Right ventricle myocardium inferior (tissue), 1 donor: ENCODE measurements at regions of chr5 and their contacts with region 1.

Region 1: DNA sequence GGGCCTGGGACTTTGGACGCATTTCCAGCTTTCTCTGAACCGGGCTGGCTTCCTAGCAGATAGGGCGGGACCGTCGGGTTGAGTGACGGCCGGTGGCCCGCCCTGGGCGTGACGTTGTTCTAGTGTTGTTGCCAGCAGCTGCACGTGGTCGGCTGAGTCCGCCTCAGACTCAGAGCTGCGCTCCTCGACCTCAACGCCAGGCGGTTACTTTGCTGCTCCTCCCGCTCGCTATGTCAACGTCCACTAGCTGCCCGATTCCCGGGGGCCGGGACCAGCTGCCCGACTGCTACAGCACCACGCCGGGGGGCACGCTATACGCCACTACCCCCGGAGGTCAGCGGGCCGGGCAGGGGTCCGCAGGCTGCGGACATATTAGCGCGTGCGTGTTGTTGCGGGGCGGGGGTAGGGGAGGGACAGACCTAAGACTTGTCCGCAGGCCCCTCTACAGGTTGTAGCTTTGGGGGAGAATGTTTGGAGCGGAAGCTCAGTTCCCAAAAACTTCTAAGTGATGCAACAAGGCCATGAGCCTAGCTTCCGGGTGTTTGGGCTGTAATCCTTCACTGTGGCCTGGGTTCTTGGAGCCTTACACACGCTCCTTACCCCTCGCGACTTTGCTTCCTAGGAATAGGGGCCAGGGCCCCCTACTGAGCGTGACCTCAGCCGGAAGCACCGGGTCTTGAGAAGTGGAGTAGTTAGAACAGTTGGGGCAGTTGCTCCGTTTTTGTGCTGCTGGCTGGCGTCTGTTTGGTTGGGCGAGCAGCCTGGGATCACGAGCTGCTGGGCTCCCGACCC is at the start of gene EIF4EBP3:
- DNase-seq: peak; percentile 98
- ATAC-seq: peak; percentile 93
- total RNA-seq, gene EIF4EBP3: 11.7 TPM

Region 2: DNA sequence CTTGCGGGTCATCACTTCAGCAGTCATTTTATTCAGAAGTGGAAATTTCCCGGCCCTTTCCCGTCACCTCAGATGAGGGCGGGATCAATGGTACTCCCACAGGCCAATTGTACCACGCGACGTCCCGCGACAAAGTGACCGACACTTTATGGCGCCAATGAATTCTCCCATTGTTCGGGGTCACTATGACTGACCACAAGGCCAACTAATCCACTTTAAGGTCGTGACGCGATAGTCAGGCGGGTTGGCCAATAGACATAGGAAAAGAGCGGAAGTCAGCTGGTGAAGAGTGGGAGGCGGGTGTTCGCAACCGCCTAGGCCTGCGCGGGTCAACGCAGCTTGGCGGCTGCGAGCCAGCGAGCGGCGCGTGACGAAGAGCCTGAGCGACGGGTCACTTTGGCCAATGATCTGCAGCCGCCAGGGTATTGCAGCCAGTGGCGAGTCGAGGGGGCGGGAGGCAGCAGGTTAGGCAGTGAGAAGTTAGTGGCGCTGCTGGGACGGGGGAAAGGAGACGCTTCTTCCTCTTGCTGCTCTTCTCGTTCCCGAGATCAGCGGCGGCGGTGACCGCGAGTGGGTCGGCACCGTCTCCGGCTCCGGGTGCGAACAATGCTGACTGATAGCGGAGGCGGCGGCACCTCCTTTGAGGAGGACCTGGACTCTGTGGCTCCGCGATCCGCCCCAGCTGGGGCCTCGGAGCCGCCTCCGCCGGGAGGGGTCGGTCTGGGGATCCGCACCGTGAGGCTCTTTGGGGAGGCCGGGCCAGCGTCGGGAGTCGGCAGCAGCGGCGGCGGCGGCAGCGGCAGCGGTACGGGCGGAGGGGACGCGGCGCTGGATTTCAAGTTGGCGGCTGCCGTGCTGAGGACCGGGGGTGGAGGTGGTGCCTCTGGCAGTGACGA is 146.1 kb before region 1 on chr5 and contains the start of gene ANKHD1:
- intact Hi-C with region 1: loop called (anchors 5 kb)
- DNase-seq: peak; percentile 99
- ATAC-seq: peak; percentile 95
- total RNA-seq, gene ANKHD1: 57.2 TPM

Region 3: GRCh38 chr5:140575309-140575708 is 27.6 kb after region 1 on chr5:
- intact Hi-C with region 1: no loop called
- DNase-seq: peak; percentile 83
- ATAC-seq: peak; percentile 47

Region 4: GRCh38 chr5:140639148-140639979 is 91.7 kb after region 1 on chr5 and contains the start of gene TMCO6:
- intact Hi-C with region 1: loop called (anchors 2 kb)
- DNase-seq: peak; percentile 99
- ATAC-seq: peak; percentile 99
- total RNA-seq, gene TMCO6: 4.2 TPM

Region 5: DNA sequence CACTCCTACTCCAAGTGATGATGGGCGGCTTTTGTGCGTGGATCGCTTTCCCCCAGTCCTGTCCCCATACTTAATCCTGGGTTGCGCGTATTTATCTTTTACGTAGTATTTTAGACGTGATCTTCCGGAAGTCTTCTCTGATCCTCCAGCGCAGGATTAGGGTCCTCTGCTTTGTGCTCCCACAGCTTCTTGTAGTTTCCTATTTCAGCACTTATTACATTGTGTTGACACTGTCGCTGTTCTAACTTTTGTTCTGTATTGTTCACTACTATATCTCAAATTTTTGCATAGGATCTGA is 100.4 kb after region 1 on chr5:
- intact Hi-C with region 1: loop called (anchors 2 kb)
- DNase-seq: no peak
- ATAC-seq: no peak

Region 6: DNA sequence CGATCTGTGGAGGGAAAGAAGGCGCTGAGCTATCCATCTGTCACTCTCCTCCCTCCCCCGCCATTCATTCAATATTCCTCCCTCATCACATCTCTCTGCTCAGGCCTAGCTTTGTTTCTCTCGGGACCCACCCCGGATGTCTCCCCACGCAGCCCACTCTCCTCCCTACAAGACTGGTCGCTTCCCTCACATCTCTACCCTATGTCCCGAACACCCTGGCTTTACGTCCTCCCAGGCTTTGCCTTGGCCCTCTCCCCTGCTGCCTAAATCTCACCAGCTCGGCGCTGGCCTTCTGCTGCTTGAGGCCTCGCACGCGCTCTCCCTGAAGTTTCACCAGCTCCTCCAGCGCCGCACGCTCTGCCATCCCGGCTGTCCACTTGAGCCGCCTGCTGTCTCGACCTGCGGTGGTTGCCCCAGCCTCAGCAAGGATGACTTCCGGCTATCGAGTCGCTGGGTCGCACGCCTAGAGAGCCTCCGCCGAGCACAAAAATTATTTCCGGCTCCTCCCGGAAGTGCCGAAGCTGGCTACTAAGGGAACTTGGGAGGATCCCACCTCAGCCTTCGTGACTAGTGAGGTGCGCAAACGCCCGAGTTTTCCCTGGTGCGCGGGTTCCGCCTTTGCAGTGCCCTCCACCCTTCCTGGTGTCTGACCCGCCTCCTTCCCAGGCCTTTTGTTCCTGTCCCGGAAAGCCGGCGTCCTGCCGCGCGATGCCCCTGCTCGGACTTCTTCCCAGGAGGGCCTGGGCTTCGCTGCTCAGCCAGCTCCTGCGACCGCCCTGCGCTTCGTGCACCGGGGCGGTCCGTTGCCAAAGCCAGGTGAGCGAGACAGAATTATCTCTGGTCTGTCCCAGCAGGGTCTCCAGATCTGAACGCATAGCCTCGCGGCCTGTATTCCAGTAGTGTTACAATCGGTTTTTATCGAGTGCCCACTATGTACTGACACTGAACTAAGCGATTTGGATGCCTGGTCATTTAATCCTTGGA is 143.5 kb after region 1 on chr5 and contains the starts of genes HARS1 and HARS2:
- intact Hi-C with region 1: loop called (anchors 5 kb)
- DNase-seq: peak; percentile 93
- ATAC-seq: peak; percentile 98
- total RNA-seq, gene HARS1: 35.9 TPM
- total RNA-seq, gene HARS2: 24.4 TPM